Activated naive CD4-positive, alpha-beta T cell treated with anti-CD3 and anti-CD28 coated beads, Interleukin-2, amount 10 ng/mL, durations not matched to agents 7 days and 5 days (primary cell): ENCODE measurements at regions of chr5 and their contacts with region 1.

Region 1: DNA sequence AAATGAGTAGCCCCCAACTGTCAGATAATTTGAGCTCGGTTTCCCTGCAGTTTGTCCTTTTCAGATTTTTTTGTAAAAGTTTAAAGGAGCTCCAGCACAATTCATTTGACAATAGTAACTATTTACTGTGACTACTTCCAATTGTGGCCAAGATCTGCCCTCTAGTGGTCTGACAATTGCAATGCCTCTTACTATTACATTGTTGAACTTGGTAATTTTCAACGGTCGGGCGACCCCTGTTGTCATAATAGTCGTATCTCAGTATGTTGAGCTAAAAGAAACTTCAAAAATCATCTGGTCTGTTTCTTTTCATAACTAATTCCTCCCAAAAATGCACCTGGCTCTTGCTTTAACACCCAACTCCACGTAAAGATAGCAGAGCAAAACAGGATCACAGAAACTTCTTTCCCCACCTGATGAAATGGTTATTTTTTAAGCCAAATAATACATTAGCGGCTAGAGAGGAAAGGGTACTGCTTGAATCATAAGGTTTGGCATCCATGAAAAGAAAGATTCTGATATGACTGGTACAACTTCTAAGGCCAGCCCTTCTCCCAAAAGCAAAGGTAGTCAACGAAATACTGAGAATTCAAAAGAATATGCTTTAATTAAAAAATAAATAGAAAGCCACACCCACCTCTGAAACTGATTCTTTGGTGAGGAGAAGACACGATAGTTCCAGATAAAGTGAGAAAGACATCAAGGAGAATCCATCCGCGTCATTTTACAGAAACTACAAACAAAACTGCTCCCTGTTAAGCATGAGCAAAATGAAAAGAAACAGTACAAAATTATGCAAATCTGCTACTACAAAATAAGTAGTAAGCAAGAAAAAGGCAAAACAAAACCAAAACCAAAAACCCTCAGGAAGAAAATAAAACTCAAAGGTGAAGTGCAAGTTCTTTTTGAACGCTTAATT is 76.9 kb upstream of the HTR4 start:
- DNase-seq: peak; percentile 78
- H3K4me3 Mint-ChIP-seq: no peak overlapping the region
- H3K27ac Mint-ChIP-seq: no peak overlapping the region
- H3K4me1 Mint-ChIP-seq: peaks cover 2% of the 10 kb centered on the region
- H3K27me3 Mint-ChIP-seq: peaks cover 8% of the 10 kb centered on the region

Region 2: GRCh38 chr5:148179234-148179824 is 551.9 kb before region 1 on chr5:
- CTCF ChIA-PET with region 1: interaction called, 23 read pairs
- DNase-seq: no peak
- H3K4me3 Mint-ChIP-seq: no peak overlapping the region
- H3K27ac Mint-ChIP-seq: no peak overlapping the region
- H3K4me1 Mint-ChIP-seq: no peaks in the 10 kb centered on the region
- H3K27me3 Mint-ChIP-seq: no peaks in the 10 kb centered on the region

Region 3: GRCh38 chr5:148482691-148483462 is 248.3 kb before region 1 on chr5:
- CTCF ChIA-PET with region 1: interaction called, 12 read pairs
- DNase-seq: peak; percentile 74
- H3K4me3 Mint-ChIP-seq: no peak overlapping the region
- H3K27ac Mint-ChIP-seq: no peak overlapping the region
- H3K4me1 Mint-ChIP-seq: no peaks in the 10 kb centered on the region
- H3K27me3 Mint-ChIP-seq: peaks cover 22% of the 10 kb centered on the region

Region 4: DNA sequence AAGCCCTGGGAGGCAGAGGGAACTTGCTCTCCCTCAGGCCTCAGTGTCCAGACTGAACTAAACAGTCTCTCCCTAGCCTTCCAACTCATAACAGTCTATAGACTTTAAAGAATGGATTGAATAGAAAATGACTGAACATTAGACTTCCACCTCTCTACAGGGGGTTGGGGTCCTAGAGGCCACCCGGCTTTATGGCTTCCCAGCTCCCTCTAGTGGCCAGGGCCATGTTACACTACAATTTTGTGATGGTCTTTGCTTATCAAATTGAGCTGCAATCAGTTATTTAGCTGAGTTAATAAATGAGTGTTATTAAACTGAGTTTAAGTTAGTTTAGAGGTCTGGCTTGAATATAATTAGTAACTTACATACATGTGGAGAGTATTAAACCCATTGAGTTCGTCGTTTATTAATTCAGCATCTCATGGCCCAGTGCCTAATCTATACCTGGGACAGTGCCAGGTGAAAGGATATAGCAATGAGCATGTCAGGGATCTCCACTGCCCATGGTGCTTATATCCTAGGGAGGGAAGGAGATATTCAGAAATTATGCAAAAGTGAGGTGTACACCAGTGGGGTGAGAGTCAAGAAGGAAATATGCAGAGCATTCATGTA is 226.5 kb after region 1 on chr5:
- CTCF ChIA-PET with region 1: interaction called, 59 read pairs
- DNase-seq: peak; percentile 57
- H3K4me3 Mint-ChIP-seq: no peak overlapping the region
- H3K27ac Mint-ChIP-seq: no peak overlapping the region
- H3K4me1 Mint-ChIP-seq: no peaks in the 10 kb centered on the region
- H3K27me3 Mint-ChIP-seq: peaks cover 8% of the 10 kb centered on the region

Region 5: DNA sequence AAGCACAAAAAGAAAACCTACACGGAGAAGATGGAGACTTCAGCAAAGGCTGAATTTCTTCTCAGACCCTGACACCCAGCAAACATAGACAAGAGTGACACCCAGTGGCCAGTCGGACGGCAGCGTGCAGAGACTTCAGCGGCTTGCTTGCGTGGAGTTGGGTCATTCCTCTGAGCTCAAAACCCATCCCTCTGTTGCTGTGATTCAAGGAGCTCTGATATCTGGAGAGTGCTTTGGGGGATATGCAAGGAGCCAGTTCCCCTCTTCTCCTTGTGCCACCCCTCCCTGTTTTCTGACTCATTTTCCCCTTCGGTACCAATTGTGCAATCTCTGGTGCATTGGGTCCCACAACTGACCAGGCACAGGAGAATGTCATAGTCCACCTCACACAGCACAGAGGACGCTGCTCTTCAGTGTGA is 304.2 kb after region 1 on chr5:
- CTCF ChIA-PET with region 1: interaction called, 179 read pairs
- DNase-seq: peak; percentile 77
- H3K4me3 Mint-ChIP-seq: no peak overlapping the region
- H3K27ac Mint-ChIP-seq: no peak overlapping the region
- H3K4me1 Mint-ChIP-seq: peaks cover 34% of the 10 kb centered on the region
- H3K27me3 Mint-ChIP-seq: peaks cover 11% of the 10 kb centered on the region